ENCODE measurements at regions of chr6 and their contacts with region 1.

Region 1: GRCh38 chr6:139375232-139376016 is 976 bp upstream of the CITED2 start:
- DNase-seq: peak; percentile 81
- H3K4me3 Mint-ChIP-seq: peak overlapping the region; percentile 87
- H3K27ac Mint-ChIP-seq: peak overlapping the region; percentile 98
- H3K4me1 Mint-ChIP-seq: peaks cover 31% of the 10 kb centered on the region
- H3K27me3 Mint-ChIP-seq: no peaks in the 10 kb centered on the region

Region 2: GRCh38 chr6:138773177-138774091 is 602.0 kb before region 1 on chr6 and contains the start of gene CCDC28A:
- intact Hi-C with region 1: loop called (anchors 2 kb)
- DNase-seq: peak; percentile 89
- H3K4me3 Mint-ChIP-seq: peak within 1 kb of the TSS; percentile 99
- H3K27ac Mint-ChIP-seq: peak within 1 kb of the TSS; percentile 100
- H3K4me1 Mint-ChIP-seq: peaks cover 23% of the 10 kb centered on the region
- H3K27me3 Mint-ChIP-seq: no peaks in the 10 kb centered on the region
- total RNA-seq, gene CCDC28A: 16.1 and 17.9 TPM in 2 replicates

Region 3: DNA sequence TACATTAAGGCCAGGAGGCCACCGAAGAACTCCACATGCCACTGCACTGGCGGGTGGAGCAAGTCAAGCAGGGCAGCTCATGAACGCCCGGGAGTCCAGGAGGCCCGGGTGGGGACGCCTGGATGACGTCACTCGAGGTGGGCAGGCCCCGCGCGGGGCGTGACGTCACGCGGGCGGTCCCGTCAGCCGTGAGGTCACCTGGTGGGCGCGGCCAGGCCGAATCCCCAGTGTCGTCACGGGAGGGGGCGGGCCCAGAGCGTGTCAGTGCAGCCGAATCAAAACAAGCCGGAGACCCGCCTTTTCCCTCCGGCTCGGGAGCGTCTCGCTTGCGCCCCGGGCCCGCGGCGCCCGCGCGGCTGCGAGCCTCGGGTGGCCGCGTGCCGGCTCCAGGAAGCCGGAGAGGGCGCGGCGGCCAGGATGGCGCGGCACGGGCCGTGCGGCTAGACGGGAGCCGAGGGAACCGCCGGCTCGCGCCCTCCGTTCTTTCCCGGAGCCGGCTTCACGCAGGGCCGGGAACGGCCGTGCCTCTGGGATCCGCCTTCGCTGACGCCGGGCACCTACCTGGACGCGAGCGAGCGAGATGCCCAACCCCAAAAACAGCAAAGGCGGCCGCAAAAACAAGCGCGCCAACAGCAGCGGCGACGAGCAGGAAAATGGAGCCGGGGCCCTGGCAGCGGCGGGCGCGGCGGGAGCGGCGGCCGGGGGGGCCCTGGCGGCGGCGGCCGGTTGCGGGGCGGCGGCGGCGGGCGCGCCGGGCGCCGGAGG is 240.4 kb before region 1 on chr6 and contains the start of gene HECA:
- intact Hi-C with region 1: loop called (anchors 1 kb)
- DNase-seq: peak; percentile 97
- H3K4me3 Mint-ChIP-seq: peak within 1 kb of the TSS; percentile 85
- H3K27ac Mint-ChIP-seq: peak within 1 kb of the TSS; percentile 84
- H3K4me1 Mint-ChIP-seq: peaks cover 72% of the 10 kb centered on the region
- H3K27me3 Mint-ChIP-seq: no peaks in the 10 kb centered on the region
- total RNA-seq, gene HECA: 49.1 and 49.9 TPM in 2 replicates

Region 4: GRCh38 chr6:139285590-139285989 is 89.8 kb before region 1 on chr6:
- intact Hi-C with region 1: no loop called
- DNase-seq: no peak
- H3K4me3 Mint-ChIP-seq: no peak overlapping the region
- H3K27ac Mint-ChIP-seq: no peak overlapping the region
- H3K4me1 Mint-ChIP-seq: peaks cover 46% of the 10 kb centered on the region
- H3K27me3 Mint-ChIP-seq: no peaks in the 10 kb centered on the region

Region 5: GRCh38 chr6:139540276-139540675 is 164.9 kb after region 1 on chr6:
- intact Hi-C with region 1: loop called (anchors 1 kb)
- DNase-seq: peak; percentile 56
- H3K4me3 Mint-ChIP-seq: peak overlapping the region; percentile 38
- H3K27ac Mint-ChIP-seq: peak overlapping the region; percentile 73
- H3K4me1 Mint-ChIP-seq: peaks cover 66% of the 10 kb centered on the region
- H3K27me3 Mint-ChIP-seq: no peaks in the 10 kb centered on the region

Region 6: GRCh38 chr6:139820210-139820609 is 444.8 kb after region 1 on chr6:
- intact Hi-C with region 1: no loop called
- DNase-seq: no peak
- H3K4me3 Mint-ChIP-seq: no peak overlapping the region
- H3K27ac Mint-ChIP-seq: no peak overlapping the region
- H3K4me1 Mint-ChIP-seq: no peaks in the 10 kb centered on the region
- H3K27me3 Mint-ChIP-seq: peaks cover 11% of the 10 kb centered on the region

Region 7: DNA sequence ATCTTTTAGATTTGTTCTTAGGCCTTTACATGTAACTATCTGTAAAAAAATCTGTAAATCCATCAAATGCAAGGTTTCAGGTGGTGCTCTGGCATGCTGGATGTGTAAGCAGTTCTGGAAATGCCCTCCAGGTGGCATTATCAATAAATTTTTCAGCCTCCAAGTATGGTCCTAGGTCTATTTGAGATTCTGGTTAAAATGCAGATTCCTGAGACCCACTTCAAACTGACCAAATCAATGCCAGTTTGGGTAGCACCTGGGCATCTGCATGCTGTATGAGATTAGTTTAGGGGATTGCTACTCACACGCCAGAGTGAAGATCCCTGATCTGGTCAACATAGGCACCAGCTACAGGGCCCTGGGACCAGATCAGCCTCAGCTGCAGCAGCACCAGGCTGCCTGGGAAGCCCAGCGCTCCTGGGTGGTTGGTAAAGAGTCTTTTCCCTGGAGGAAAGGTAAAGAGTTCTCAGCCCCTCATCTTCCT is 506.3 kb after region 1 on chr6:
- intact Hi-C with region 1: loop called (anchors 5 kb)
- DNase-seq: no peak
- H3K4me3 Mint-ChIP-seq: no peak overlapping the region
- H3K27ac Mint-ChIP-seq: no peak overlapping the region
- H3K4me1 Mint-ChIP-seq: peaks cover 6% of the 10 kb centered on the region
- H3K27me3 Mint-ChIP-seq: peaks cover 3% of the 10 kb centered on the region

Region 8: GRCh38 chr6:140586426-140587061 is 1211.1 kb after region 1 on chr6:
- intact Hi-C with region 1: loop called (anchors 2 kb)
- DNase-seq: peak; percentile 46
- H3K4me3 Mint-ChIP-seq: peak overlapping the region; percentile 32
- H3K27ac Mint-ChIP-seq: peak overlapping the region; percentile 94
- H3K4me1 Mint-ChIP-seq: peaks cover 48% of the 10 kb centered on the region
- H3K27me3 Mint-ChIP-seq: peaks cover 2% of the 10 kb centered on the region

Region 9: DNA sequence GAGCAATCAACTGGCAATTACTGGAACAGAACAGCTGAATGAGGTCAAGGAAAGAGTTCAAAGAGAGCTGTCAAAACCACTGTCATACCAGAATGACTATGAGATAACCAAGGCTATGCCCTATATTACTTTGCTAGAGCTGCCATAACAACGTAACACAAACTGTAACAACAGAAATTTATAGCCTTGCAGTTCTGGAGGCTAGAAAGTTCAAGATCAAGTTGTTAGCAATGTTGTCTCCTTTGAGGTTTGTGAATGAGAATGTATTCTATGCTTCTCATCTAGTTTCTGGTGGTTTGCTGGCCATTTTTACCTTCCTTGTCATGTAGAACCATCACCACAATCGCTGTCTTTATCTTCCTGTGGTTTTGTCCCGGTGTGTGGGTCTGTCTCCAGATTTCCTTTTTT is 1434.3 kb after region 1 on chr6:
- intact Hi-C with region 1: loop called (anchors 2 kb)
- DNase-seq: peak; percentile 30
- H3K4me3 Mint-ChIP-seq: no peak overlapping the region
- H3K27ac Mint-ChIP-seq: peak overlapping the region; percentile 75
- H3K4me1 Mint-ChIP-seq: peaks cover 16% of the 10 kb centered on the region
- H3K27me3 Mint-ChIP-seq: peaks cover 10% of the 10 kb centered on the region